Caco-2 (cell line): ENCODE measurements at regions of chr6 and their contacts with region 1.

Region 1: GRCh38 chr6:46626228-46626909 is 26.2 kb downstream of the CYP39A1 start:
- DNase-seq: peak in 1 of 2 experiments; percentile 16
- H3K4me3 ChIP-seq: no peak overlapping the region
- H3K4me3 Mint-ChIP-seq: no peak overlapping the region
- H3K27ac Mint-ChIP-seq: no peak overlapping the region
- H3K4me1 ChIP-seq: no peaks in the 10 kb centered on the region
- H3K4me1 Mint-ChIP-seq: no peaks in the 10 kb centered on the region
- H3K27me3 ChIP-seq: no peaks in the 10 kb centered on the region
- H3K27me3 Mint-ChIP-seq: peaks cover 8% of the 10 kb centered on the region
- CTCF ChIP-seq: peak; percentile 35 to 64

Region 2: GRCh38 chr6:46491628-46492547 is 134.5 kb before region 1 on chr6:
- CTCF ChIA-PET with region 1: no interaction called
- POLR2A ChIA-PET with region 1: no interaction called
- intact Hi-C with region 1: loop called (anchors 5 kb)
- DNase-seq: peak in 1 of 2 experiments; percentile 23
- H3K4me3 ChIP-seq: peak overlapping the region; percentile 44
- H3K4me3 Mint-ChIP-seq: peak overlapping the region; percentile 73
- H3K27ac Mint-ChIP-seq: no peak overlapping the region
- H3K4me1 ChIP-seq: peaks cover 9% of the 10 kb centered on the region; the same call in 1 of the 2 replicates
- H3K4me1 Mint-ChIP-seq: peaks cover 7% of the 10 kb centered on the region
- H3K27me3 ChIP-seq: no peaks in the 10 kb centered on the region; the same call in none of the 2 replicates
- H3K27me3 Mint-ChIP-seq: peaks cover 33% of the 10 kb centered on the region
- CTCF ChIP-seq: peak; percentile 16 to 67

Region 3: GRCh38 chr6:46565531-46565930 is 60.8 kb before region 1 on chr6:
- CTCF ChIA-PET with region 1: no interaction called
- POLR2A ChIA-PET with region 1: no interaction called
- intact Hi-C with region 1: no loop called
- DNase-seq: no peak
- H3K4me3 ChIP-seq: no peak overlapping the region
- H3K4me3 Mint-ChIP-seq: no peak overlapping the region
- H3K27ac Mint-ChIP-seq: no peak overlapping the region
- H3K4me1 ChIP-seq: no peaks in the 10 kb centered on the region
- H3K4me1 Mint-ChIP-seq: no peaks in the 10 kb centered on the region
- H3K27me3 ChIP-seq: no peaks in the 10 kb centered on the region
- H3K27me3 Mint-ChIP-seq: peaks cover 10% of the 10 kb centered on the region
- CTCF ChIP-seq: no peak